ENCODE measurements at regions of chr6 and their contacts with region 1.

Region 1: DNA sequence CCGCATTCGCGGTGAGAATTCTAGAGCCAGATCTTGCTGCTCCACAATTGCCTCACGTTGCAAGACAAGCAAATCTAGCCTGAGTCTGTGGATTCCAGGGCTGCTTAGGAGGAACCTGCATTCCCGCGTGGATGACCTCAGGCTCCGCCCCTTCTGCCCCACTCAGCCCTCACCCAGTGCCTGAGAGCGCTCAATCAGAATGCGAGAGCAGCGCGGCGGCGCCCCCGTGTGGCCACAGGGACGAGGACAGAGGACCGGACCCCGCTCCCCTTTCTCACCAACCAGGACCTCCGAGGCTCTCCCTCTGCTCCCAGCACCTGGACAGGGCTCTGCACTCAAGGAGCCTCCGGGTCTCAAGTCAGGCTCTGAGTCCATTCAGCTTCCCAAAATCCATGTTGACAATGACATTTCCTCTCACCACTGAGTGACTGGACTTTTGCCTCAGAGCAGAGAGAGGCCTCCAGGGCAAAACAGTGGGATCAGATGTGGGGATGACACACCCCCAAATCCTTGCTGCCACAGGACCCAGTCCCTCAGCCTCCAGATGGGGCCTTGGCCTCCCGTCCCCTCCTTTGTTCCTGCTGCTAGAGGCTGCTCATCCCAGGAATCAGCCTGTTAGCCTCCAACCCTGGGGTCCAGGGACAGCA is 52.0 kb downstream of the RPP21 start:
- DNase-seq: peak; percentile 58 to 89 (median 76)
- ATAC-seq: peak; percentile 99
- H3K4me3 ChIP-seq: no peak overlapping the region
- H3K4me3 Mint-ChIP-seq: peak overlapping the region in 2 of 10 donors; percentile 39 to 44
- H3K27ac ChIP-seq: no peak overlapping the region
- H3K27ac Mint-ChIP-seq: peak overlapping the region in 1 of 9 donors; percentile 67
- H3K4me1 ChIP-seq: no peaks in the 10 kb centered on the region
- H3K4me1 Mint-ChIP-seq: peaks cover 0 to 6% (median 0%) of the 10 kb centered on the region in 7 donors
- H3K27me3 ChIP-seq: peaks cover 0 to 4% of the 10 kb centered on the region in 2 donors
- H3K27me3 Mint-ChIP-seq: peaks cover 20 to 51% (median 40%) of the 10 kb centered on the region in 5 donors

Region 2: GRCh38 chr6:30238174-30238795 is 158.7 kb before region 1 on chr6:
- CTCF ChIA-PET with region 1: interaction called, 6 read pairs
- POLR2A ChIA-PET with region 1: no interaction called
- intact Hi-C with region 1: loop called (anchors 1 kb)
- DNase-seq: peak in 5 of 9 donors; percentile 8 to 36 (median 27)
- ATAC-seq: peak; percentile 62
- H3K4me3 ChIP-seq: no peak overlapping the region
- H3K4me3 Mint-ChIP-seq: no peak overlapping the region
- H3K27ac ChIP-seq: no peak overlapping the region
- H3K27ac Mint-ChIP-seq: no peak overlapping the region
- H3K4me1 ChIP-seq: no peaks in the 10 kb centered on the region
- H3K4me1 Mint-ChIP-seq: peaks cover 0 to 4% (median 0%) of the 10 kb centered on the region in 7 donors
- H3K27me3 ChIP-seq: peaks cover 0 to 3% of the 10 kb centered on the region in 2 donors
- H3K27me3 Mint-ChIP-seq: peaks cover 18 to 59% (median 32%) of the 10 kb centered on the region in 5 donors

Region 3: DNA sequence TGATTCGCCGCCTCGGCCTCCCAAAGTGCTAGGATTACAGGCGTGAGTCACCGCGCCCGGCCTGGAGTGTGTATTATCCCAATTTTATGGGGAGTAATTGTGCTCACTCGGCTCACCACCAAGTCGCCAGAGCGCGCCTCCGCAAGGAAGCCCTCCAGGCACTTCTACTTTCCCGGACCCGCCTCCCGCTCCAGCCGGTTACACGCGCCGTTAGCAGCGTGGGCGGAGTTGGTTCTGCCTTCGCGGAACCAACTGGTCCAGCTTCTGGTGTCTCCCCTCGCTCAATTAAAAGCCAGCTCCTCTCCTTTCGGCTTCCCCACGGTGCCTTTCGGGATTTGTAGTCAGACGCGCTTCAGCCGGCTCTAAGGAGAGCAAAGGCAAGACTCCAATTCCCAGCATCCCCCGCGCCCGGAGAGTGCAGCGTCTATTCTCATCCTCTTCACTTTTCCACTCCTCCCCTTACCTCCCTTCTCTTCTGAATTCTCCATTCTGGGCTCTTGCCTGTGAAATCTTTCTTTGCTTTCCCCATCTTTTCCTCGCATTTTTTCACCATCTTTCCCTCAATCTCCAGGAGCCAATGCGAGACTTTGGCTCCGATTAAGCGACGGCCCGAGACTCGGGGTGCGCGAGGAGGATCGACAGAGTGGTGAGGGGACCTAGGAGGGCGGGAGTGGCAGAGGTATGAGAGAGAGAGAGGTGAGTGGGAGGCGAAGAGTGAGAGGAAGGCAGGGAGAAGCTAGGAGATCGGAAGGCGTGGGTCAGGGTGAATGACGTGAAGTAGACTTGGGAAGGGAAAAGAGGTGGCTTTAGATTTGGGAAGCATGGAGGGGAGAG is 511.0 kb after region 1 on chr6 and contains the start of gene GTF2H4:
- CTCF ChIA-PET with region 1: no interaction called
- POLR2A ChIA-PET with region 1: no interaction called
- intact Hi-C with region 1: no loop called
- DNase-seq: peak; percentile 77 to 96 (median 89)
- ATAC-seq: peak; percentile 99
- H3K4me3 ChIP-seq: peak within 1 kb of the TSS; percentile 90
- H3K4me3 Mint-ChIP-seq: peak within 1 kb of the TSS; percentile 95 to 100 (median 99)
- H3K27ac ChIP-seq: peak within 1 kb of the TSS; percentile 78
- H3K27ac Mint-ChIP-seq: peak within 1 kb of the TSS; percentile 72 to 95 (median 82)
- H3K4me1 ChIP-seq: peaks cover 6 to 9% of the 10 kb centered on the region in 2 donors
- H3K4me1 Mint-ChIP-seq: peaks cover 15 to 34% (median 22%) of the 10 kb centered on the region in 7 donors
- H3K27me3 ChIP-seq: no peaks in the 10 kb centered on the region
- H3K27me3 Mint-ChIP-seq: no peaks in the 10 kb centered on the region
- total RNA-seq, gene GTF2H4: 18.8 to 42.3 (median 32.2) TPM